Aorta (tissue), 5 donors: ENCODE measurements at regions of chr22 and their contacts with region 1.

Region 1: GRCh38 chr22:49930739-49931412 is 12.4 kb downstream of the CRELD2 start:
- DNase-seq: peak in 1 of 2 donors; percentile 86
- ATAC-seq: no peak
- H3K4me3 ChIP-seq: no peak overlapping the region
- H3K27ac ChIP-seq: no peak overlapping the region
- H3K4me1 ChIP-seq: peaks cover 0 to 1% of the 10 kb centered on the region in 2 donors
- H3K27me3 ChIP-seq: no peaks in the 10 kb centered on the region

Region 2: DNA sequence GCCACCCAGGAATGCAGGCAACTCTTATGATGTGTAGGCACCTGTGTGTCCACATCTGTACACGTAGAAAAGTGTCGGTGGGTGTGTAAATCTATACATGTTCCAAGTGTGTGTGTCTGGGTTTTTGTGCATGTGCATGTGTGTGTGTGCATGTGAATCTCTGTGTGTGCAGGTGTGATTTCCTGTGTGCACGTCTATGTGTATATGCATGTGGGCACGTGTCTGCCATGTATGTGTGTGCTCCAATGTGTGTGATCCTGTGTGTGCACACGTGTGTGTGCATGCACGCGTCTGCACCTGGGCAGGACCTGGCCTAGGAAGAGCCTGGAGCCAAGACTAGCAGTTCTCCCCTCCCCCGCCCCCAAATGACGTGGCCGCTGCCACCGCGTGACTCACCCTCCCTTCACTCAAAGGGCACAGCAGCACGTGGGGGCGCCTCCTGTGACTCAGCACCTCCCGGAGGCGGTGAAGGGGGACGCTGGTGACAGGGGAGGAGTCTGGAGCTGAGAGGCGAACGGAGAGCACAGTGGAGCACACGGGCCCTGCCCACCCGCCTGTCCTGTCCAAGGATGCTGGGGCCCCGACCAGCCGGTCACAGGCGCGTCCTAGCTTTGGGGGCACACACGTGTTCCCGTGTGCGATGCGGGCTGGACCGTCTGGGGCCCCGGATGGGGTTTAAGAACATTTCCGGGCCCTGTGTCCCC is 39.8 kb after region 1 on chr22:
- intact Hi-C with region 1: loop called (anchors 2 to 10 kb)
- DNase-seq: peak; percentile 98 to 99
- ATAC-seq: peak; percentile 93
- H3K4me3 ChIP-seq: peak overlapping the region; percentile 9 to 14
- H3K27ac ChIP-seq: peak overlapping the region in 1 of 2 donors; percentile 25
- H3K4me1 ChIP-seq: no peaks in the 10 kb centered on the region
- H3K27me3 ChIP-seq: no peaks in the 10 kb centered on the region

Region 3: DNA sequence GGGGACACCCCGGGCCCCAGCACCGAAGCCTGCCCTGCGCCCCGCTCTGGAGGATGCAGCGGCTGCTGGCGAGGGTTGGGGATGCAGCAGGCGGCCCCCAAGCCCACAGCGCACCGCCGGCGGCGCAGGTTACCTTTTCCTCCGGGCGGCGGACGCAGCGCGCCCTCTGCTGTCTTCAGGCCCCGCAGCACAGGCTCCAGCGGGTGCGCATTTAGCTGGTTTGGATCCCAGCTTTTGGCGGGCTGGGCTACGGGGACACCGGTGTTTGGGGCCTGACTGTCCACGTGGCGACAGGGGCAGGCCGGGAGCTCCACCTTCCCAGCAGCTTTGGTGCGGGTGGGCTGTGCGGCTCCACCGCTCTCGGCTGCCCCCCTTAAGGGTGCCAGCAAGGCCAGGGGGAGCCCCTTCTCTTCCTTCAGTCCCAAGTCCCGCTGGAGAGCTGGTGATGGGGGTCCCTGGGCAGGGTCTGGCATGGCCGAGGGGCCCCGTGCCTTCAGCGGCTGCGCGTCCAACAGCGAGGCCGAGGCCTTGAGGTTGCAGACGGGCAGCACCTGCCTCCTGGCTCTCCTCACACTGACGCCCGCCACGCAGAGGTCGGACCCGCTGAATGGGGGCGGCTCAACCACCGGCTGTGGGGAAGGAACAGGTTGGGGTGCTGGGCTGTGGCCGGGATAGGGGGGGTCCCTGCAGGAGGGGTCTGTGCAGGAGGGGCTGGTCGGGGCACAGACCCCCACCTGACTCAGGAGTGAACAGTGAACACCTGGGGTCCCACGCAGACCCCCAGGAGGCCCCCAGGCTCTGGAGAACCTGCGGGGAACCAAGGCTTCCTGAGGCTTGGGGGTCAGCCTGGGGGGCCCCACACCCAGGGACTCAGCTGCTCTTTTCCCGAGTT is 99.7 kb after region 1 on chr22:
- intact Hi-C with region 1: loop called (anchors 1 to 2 kb)
- DNase-seq: peak; percentile 75 to 93
- ATAC-seq: peak; percentile 79
- H3K4me3 ChIP-seq: no peak overlapping the region
- H3K27ac ChIP-seq: no peak overlapping the region
- H3K4me1 ChIP-seq: no peaks in the 10 kb centered on the region
- H3K27me3 ChIP-seq: no peaks in the 10 kb centered on the region

Region 4: DNA sequence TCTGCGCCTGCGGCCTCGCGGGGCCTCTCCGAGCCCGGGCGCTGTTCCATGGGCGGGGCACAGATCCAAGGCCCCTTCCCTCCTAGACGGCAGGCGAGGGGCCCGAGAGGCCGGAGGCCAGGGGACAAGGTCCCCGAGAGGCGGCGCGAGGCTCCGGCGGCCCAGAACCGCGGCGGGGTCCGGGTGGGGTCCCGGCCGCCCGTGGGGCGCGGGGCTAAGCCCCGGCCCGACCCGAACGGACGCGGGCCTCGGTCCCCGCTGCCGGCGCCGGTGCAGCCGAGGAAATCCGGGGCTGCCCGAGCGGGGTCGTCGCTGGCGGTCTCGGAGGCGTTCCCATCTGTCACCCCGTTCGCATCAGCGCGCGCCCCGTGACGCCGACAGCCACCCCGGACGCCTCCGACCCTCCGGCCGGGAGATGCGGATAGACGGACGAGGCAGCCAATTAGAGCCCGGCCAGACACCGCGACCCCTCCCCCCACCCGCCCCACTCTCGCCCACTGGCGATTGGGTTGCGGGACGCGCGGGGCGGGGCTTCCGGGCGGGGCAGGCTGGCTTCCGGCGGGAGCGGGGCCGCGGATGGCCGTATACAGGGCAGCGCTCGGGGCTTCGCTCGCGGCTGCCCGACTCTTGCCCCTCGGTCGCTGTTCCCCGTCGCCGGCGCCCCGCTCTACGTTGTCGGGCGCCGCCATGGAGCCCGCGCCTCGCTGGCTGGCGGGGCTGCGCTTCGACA is 269.8 kb after region 1 on chr22 and contains the start of gene SELENOO:
- intact Hi-C with region 1: loop called (anchors 5 to 10 kb)
- DNase-seq: peak; percentile 95 to 98
- ATAC-seq: peak; percentile 94
- H3K4me3 ChIP-seq: peak within 1 kb of the TSS; percentile 72 to 92
- H3K27ac ChIP-seq: peak within 1 kb of the TSS in 1 of 2 donors; percentile 35
- H3K4me1 ChIP-seq: no peaks in the 10 kb centered on the region
- H3K27me3 ChIP-seq: no peaks in the 10 kb centered on the region
- total RNA-seq, gene SELENOO: 14.2 to 21.6 TPM

Region 5: DNA sequence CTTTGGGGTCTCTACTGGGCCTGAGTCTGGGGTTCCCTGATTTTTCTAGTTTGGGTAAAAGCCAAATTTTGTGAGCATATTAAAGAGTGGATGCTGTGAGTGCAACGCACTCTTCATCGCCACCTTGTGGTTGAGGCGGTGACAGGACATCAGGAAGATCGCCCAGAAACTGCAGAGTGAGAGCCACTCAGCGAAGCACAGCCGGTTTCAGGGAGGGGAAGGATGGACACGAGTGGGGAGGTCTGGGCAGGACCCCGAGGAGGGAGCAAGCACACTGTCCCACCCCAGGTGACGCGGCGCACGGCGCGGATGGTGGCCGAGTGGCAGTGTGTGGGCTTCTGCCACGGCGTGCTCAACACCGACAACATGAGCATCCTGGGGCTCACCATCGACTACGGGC is 279.0 kb after region 1 on chr22:
- intact Hi-C with region 1: loop called (anchors 5 to 10 kb)
- DNase-seq: peak; percentile 80 to 88
- ATAC-seq: peak; percentile 61
- H3K4me3 ChIP-seq: no peak overlapping the region
- H3K27ac ChIP-seq: no peak overlapping the region
- H3K4me1 ChIP-seq: no peaks in the 10 kb centered on the region
- H3K27me3 ChIP-seq: no peaks in the 10 kb centered on the region